Activated T-helper 1 cell treated with anti-CD3 and anti-CD28 coated beads, Interleukin-12 subunit alpha, Interleukin-12 subunit beta, Interleukin-2, Interleukin-4 antibody, amounts not matched to agents 30 ng/mL and 10 ng/mL and 1 ng/mL, durations not matched to agents 14 hours and 24 hours and 36 hours (primary cell): ENCODE measurements at regions of chr5 and their contacts with region 1.

Region 1: GRCh38 chr5:14415024-14415697 is 166.4 kb upstream of the OTULINL start:
- DNase-seq: no peak
- H3K4me3 Mint-ChIP-seq: peak overlapping the region; percentile 43
- H3K27ac Mint-ChIP-seq: peak overlapping the region; percentile 90
- H3K4me1 Mint-ChIP-seq: peaks cover 52% of the 10 kb centered on the region
- H3K27me3 Mint-ChIP-seq: peaks cover 7% of the 10 kb centered on the region

Region 2: GRCh38 chr5:14364576-14365472 is 50.3 kb before region 1 on chr5:
- intact Hi-C with region 1: no loop called
- DNase-seq: no peak
- H3K4me3 Mint-ChIP-seq: no peak overlapping the region
- H3K27ac Mint-ChIP-seq: peak overlapping the region; percentile 24
- H3K4me1 Mint-ChIP-seq: peaks cover 54% of the 10 kb centered on the region
- H3K27me3 Mint-ChIP-seq: no peaks in the 10 kb centered on the region

Region 3: DNA sequence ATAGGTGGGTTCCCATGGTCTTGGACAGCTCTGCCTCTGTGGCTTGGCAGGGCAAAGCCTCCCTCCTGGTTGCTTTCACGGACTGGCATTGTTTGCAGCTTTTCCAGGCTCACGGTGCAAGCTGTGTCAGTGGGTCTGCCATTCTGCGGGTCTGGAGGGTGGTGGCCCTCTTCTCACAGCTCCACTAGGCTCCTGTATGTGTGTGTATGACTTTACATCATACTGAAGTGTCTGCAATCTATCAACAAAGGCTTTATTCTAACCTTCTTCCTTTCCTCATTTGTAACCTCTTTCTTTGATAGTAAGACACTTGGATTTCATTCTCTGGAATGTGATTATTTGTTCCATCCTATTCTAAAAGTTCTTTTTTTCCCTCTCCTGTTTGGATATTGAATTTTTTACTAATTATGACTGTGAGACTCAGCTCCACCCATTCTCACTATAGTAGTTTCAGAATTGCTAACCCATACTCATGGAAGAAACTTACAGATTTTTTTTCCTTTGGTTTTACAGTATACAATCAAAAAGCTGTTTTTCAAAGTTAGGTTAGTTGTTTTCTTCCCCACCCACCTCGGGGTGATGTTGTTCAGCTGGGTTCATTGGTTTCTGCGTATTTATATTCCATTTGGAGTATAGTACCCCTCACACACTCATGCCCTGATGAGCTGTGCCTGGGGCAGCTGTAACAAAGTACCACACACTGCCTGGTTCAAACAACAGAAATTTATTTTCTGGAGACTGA is 21.8 kb after region 1 on chr5:
- intact Hi-C with region 1: loop called (anchors 1 kb)
- DNase-seq: no peak
- H3K4me3 Mint-ChIP-seq: no peak overlapping the region
- H3K27ac Mint-ChIP-seq: peak overlapping the region; percentile 49
- H3K4me1 Mint-ChIP-seq: peaks cover 22% of the 10 kb centered on the region
- H3K27me3 Mint-ChIP-seq: peaks cover 6% of the 10 kb centered on the region

Region 4: GRCh38 chr5:14479143-14479696 is 64.1 kb after region 1 on chr5:
- intact Hi-C with region 1: loop called (anchors 1 kb)
- DNase-seq: no peak
- H3K4me3 Mint-ChIP-seq: no peak overlapping the region
- H3K27ac Mint-ChIP-seq: peak overlapping the region; percentile 52
- H3K4me1 Mint-ChIP-seq: peaks cover 6% of the 10 kb centered on the region
- H3K27me3 Mint-ChIP-seq: peaks cover 2% of the 10 kb centered on the region

Region 5: DNA sequence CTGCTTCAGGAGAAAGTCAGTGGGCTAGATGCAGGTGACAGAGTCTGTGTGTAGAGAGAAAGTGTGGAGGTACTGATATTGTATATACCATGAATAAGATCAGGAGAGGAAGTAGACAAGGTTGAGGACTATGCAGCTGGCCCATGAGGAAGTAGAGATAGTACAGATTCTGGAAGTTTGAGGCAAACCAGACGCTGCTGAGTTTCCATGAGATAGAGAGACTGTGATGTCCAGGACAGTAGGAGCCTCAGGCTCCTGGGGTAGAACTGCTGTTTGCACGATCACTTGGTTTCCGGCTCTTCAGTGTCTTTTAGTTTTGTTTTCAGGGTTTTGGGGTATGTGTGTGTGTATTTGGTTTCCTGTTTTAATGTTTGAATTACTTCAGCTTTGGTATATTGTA is 180.0 kb after region 1 on chr5:
- intact Hi-C with region 1: loop called (anchors 1 kb)
- DNase-seq: peak; percentile 49
- H3K4me3 Mint-ChIP-seq: peak overlapping the region; percentile 78
- H3K27ac Mint-ChIP-seq: peak overlapping the region; percentile 98
- H3K4me1 Mint-ChIP-seq: peaks cover 76% of the 10 kb centered on the region
- H3K27me3 Mint-ChIP-seq: no peaks in the 10 kb centered on the region